Astrocyte of the cerebellum (primary cell): ENCODE measurements at regions of chr2 and their contacts with region 1.

Region 1: DNA sequence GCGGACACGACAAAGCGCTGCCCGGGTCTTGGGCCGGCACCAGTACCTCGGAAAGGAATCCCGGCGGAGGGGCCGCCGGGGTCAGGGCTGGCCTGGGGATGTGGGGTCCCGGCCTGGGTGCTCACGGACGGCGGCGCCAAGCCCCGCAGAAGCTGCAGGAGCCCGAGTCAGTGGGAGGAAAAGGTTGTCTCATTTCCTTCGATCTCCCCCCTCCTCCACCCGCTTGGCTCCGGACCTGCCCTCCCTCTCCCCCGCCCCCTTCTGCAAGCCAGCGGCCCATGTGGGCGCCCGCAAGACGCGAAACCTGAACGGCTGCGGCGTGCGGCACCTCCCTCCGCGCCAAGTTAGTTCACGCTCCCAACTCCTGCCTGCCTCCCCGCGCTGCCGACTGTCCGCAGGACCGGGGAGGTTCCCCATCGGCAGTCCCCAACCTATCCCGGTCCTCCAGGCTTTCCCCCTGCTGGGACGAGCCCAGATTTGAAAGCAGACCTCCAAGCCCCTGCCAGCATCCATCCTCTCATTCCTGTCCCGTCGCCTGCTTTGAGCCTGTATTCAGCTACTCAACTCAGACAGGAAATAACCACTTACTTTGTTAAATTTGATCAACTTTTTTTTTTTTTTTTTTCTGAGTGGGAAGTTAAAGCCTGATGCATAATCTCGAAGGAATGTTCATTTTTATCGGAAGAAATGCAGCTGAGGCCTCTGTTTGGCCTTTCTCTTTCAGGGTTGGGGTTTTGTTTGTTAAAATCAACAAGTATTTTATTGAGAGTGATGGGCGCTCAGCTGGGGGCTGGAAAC is at the start of gene EVA1A:
- DNase-seq: peak; percentile 61
- H3K4me3 ChIP-seq: peak within 1 kb of the TSS; percentile 76
- CTCF ChIP-seq: no peak

Region 2: DNA sequence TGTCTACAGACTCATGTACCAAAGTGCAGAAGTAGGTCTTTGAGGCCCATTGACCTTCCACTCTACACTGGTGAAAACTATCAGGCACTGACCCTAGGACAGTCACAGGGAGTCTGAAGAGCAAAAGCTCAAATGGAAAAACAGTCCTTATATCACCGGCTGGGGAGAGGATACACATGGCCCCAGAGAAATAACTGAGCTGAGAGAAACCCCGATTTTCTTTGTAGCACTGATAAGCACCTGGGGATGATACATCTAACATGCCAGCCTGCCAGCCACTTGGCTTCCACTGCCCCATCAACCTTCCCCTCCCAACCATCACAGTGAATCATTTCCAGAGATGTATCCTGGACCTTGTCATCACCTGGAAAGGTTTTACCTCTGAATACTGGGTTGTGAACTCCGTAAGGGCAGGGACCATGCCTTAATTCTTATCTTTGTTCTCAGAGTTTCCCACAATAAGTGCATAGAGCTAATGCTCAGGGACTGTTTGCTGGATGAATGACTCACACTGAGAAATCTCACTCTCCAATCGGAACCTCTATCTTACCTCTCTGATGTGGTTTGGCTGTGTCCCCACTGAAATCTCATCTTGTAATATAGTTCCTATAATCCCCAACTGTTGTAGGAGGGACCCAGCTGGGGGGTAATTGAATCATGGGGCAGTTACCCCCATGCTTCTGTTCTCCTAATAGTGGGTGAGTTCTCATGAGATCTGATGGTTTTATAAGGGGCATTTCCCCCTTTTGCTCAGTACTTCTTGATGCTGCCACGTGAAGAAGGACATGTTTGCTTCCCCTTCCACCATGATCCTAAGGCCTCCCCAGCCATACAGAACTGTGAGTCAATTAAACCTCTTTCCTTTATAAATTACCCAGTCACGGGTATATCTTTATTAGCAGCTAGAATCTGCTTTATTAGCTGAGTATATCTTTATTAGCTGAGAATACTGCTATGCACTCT is 37.4 kb before region 1 on chr2:
- in situ Hi-C with region 1: loop called (anchors 5 kb)
- DNase-seq: peak; percentile 80
- H3K4me3 ChIP-seq: no peak overlapping the region
- CTCF ChIP-seq: no peak